Activated CD4-positive, alpha-beta T cell treated with anti-CD3 and anti-CD28 coated beads, Interleukin-2, amount 10 ng/mL, durations not matched to agents 24 days and 14 days (primary cell): ENCODE measurements at regions of chr5 and their contacts with region 1.

Region 1: DNA sequence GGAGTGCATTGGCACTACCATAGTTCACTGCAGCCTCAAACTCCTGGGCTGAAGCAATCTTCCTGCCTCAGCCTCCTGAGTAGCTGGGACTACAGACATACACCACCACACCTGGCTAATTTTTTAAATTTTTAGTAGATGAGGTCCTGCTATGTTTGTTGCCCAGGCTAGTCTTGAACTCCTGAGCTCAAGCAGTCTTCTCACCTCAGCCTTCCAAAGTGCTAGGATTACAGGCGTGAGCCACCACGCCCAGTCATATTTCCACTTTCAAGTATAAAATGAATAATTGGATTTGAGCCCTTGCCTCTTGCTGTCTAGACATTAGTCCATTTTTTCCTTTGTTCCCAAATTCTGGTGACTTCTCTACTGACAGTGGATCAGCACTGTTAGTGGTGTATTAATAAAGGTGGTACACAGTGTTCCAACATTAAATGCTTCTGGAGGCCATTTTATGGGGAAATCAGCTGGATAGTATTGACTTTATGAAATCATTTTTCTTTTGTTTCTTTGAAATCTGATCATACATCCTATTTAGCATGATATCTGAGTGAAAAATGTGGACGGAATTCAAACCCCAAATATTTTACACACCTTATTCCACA is 15.9 kb downstream of the ATP6V0E1 start:
- DNase-seq: no peak
- H3K4me3 Mint-ChIP-seq: no peak overlapping the region
- H3K27ac Mint-ChIP-seq: no peak overlapping the region
- H3K4me1 Mint-ChIP-seq: peaks cover 37% of the 10 kb centered on the region
- H3K27me3 Mint-ChIP-seq: no peaks in the 10 kb centered on the region

Region 2: GRCh38 chr5:173035904-173036707 is 36.6 kb after region 1 on chr5:
- intact Hi-C with region 1: loop called (anchors 5 kb)
- DNase-seq: no peak
- H3K4me3 Mint-ChIP-seq: peak overlapping the region; percentile 82
- H3K27ac Mint-ChIP-seq: peak overlapping the region; percentile 88
- H3K4me1 Mint-ChIP-seq: peaks cover 45% of the 10 kb centered on the region
- H3K27me3 Mint-ChIP-seq: no peaks in the 10 kb centered on the region